ENCODE measurements at regions of chr12 and their contacts with region 1.

Region 1: DNA sequence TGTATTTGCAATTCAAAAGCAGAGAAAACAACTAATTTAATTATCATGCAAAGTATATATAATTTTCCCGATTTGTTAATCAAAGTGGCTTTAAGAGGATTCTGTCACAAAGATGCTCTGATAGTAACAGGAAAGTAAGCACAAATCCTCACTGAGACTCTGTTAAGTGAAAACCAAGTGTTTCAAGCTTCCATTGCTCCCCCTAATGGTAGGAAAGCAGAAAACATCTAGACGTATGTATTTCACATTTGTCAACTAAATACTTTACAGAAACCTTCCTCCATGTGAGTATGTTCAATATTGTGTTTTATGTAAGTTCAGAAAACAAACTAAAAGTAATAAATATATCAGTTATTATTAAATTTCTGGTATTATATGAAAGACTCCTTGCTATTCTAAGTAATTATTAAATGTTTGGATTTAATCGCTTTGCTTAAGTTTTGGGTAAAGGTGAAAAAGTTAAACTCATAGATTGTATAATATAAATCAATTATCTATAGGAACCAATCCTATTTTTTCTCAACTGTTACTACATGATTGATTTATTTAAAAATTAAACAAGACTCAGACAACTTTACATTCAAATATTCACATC is 1.5 kb upstream of the NTS start:
- DNase-seq: peak; percentile 45
- H3K4me3 ChIP-seq: no peak overlapping the region
- H3K27ac ChIP-seq: no peak overlapping the region
- H3K4me1 ChIP-seq: no peaks in the 10 kb centered on the region
- H3K27me3 ChIP-seq: no peaks in the 10 kb centered on the region
- CTCF ChIP-seq: peak; percentile 69 to 74

Region 2: GRCh38 chr12:85476756-85477155 is 395.8 kb before region 1 on chr12:
- CTCF ChIA-PET with region 1: no interaction called
- dilution Hi-C with region 1: no loop called
- in situ Hi-C with region 1: loop called (anchors 5 to 10 kb)
- intact Hi-C with region 1: no loop called
- DNase-seq: no peak
- H3K4me3 ChIP-seq: no peak overlapping the region
- H3K27ac ChIP-seq: no peak overlapping the region
- H3K4me1 ChIP-seq: no peaks in the 10 kb centered on the region
- H3K27me3 ChIP-seq: no peaks in the 10 kb centered on the region
- CTCF ChIP-seq: no peak

Region 3: GRCh38 chr12:86170051-86170450 is 297.5 kb after region 1 on chr12:
- CTCF ChIA-PET with region 1: no interaction called
- dilution Hi-C with region 1: no loop called
- in situ Hi-C with region 1: no loop called
- intact Hi-C with region 1: no loop called
- DNase-seq: no peak
- H3K4me3 ChIP-seq: no peak overlapping the region
- H3K27ac ChIP-seq: no peak overlapping the region
- H3K4me1 ChIP-seq: no peaks in the 10 kb centered on the region
- H3K27me3 ChIP-seq: no peaks in the 10 kb centered on the region
- CTCF ChIP-seq: no peak